PC-3 (cell line): ENCODE measurements at regions of chr2 and their contacts with region 1.

Region 1: DNA sequence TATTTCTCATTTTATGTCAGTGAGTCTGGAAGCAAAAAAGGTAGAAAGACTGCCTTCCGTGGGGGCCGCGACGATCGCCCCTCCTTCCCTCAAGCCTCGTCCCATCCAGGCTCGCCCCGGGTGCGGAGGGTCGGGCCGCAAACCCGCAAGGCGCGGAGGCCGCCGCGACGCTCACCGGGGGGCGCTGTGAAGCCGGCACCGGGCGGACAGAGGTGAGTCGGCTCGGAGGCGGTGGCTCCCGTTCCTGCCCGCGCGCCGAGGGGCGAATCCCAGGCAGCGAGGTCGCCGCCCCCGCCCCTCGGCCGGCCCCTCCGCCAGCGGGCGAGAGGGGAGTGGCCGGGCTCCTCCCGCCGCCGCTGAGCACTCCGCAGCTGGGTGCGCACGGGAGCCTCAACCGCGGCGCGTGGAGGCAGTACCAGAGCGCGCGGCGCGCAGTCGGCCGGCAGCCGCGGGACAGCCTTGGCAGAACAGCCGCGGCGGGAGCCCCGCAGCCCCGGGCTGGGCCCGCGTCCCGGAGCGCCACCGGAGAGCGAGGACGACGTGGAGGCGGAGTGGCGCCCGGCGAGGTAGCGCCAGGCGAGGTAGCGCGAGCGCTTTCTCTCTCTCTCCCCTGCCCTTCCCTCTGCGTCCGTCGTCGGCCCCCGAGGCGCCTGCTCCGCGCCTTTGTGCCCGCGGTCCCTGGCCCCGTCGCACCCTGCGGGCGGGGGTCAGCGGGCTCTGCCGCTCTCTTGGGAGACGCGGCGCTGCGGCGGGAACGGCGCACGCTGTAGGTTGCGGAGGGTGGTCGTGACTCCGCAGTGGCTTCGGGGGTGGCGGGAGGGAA is at the start of gene MYO1B:
- DNase-seq: peak; percentile 88
- ATAC-seq: peak; percentile 75
- H3K4me3 ChIP-seq: peak within 1 kb of the TSS; percentile 90
- H3K27ac ChIP-seq: peak within 1 kb of the TSS; percentile 39
- H3K4me1 ChIP-seq: peaks cover 43% of the 10 kb centered on the region
- H3K27me3 ChIP-seq: no peaks in the 10 kb centered on the region
- CTCF ChIP-seq: peak; percentile 70
- total RNA-seq, gene MYO1B: 88.0 and 93.0 TPM in 2 replicates

Region 2: DNA sequence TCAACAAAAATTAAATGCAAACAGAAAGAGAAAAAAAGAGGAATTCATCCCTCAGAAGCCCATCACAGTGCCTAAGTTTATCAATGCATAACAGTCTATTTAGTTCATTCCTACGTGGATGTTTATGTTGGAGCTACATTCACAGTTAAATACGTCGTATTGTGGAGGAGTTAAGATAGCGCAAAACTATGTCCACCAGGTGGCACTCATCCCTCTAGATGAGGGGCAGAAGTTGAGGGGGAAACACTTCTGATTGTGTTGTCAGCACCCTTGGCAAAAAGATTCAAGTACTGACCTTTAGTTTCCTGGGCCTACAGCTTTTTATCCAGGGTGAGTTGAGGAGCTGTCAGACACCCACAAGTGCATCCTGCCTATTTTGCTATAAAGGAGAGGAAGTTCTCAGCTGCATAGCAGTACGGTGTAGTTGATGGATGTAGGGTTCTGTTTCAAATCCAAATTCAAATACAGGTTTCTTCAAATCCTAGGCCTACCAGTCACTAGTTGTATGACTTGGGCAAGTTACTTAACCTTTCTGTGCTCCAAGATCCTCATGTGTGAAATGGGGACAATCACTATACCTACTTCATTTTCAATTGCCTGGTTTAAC is 26.9 kb before region 1 on chr2:
- CTCF ChIA-PET with region 1: interaction called, 3 read pairs
- POLR2A ChIA-PET with region 1: no interaction called
- intact Hi-C with region 1: loop called (anchors 1 kb)
- DNase-seq: peak; percentile 85
- ATAC-seq: peak; percentile 17; the same call in 1 of the 2 replicates
- H3K4me3 ChIP-seq: peak overlapping the region; percentile 15; the same call in 1 of the 2 replicates
- H3K27ac ChIP-seq: peak overlapping the region; percentile 84
- H3K4me1 ChIP-seq: peaks cover 49% of the 10 kb centered on the region
- H3K27me3 ChIP-seq: no peaks in the 10 kb centered on the region
- CTCF ChIP-seq: peak; percentile 88

Region 3: DNA sequence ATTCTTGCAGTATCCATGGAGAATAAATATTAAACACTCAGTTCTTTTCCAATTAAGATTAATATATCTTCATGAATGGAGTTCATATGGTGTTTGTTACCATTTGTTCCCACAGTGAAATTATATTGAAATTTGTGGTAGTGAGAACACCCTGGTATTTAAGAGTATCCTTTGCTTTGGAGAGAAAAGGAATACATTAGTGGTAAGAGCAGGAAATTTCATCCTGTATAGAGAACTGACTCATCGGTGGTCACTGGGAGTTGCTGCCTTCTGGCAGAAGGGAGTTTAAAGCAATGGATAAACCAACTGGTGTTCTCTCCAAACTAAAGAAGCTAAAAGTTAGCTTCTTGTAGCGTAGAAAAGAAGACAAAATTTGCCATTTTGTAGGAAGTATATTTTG is 107.3 kb after region 1 on chr2:
- CTCF ChIA-PET with region 1: interaction called, 4 read pairs
- POLR2A ChIA-PET with region 1: no interaction called
- intact Hi-C with region 1: loop called (anchors 5 kb)
- DNase-seq: peak; percentile 65
- ATAC-seq: peak; percentile 90
- H3K4me3 ChIP-seq: no peak overlapping the region
- H3K27ac ChIP-seq: no peak overlapping the region
- H3K4me1 ChIP-seq: peaks cover 20% of the 10 kb centered on the region; the same call in 1 of the 2 replicates
- H3K27me3 ChIP-seq: no peaks in the 10 kb centered on the region
- CTCF ChIP-seq: no peak

Region 4: DNA sequence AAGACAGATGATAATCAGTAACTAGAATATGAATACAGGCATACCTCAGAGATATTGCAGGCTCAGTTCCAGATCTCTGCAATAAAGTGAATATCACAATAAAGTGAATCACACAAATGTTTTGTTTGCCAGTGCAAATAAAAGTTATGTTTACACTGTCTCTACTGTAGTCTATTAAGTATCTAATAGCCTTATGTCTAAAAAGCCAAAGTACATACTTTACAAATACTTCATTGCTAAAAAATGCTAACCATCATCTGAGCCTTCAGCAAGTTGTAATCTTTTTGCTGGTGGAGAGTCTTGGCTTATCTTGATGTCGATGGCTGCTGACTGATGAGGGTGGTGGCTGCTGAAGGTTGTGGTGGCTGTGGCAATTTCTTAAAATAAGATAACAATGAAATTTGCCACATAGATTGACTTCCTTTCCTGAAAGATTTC is 159.3 kb after region 1 on chr2:
- CTCF ChIA-PET with region 1: no interaction called
- POLR2A ChIA-PET with region 1: no interaction called
- intact Hi-C with region 1: loop called (anchors 2 kb)
- DNase-seq: peak; percentile 90
- ATAC-seq: peak; percentile 92
- H3K4me3 ChIP-seq: no peak overlapping the region
- H3K27ac ChIP-seq: peak overlapping the region; percentile 39
- H3K4me1 ChIP-seq: peaks cover 28% of the 10 kb centered on the region
- H3K27me3 ChIP-seq: no peaks in the 10 kb centered on the region
- CTCF ChIP-seq: no peak

Region 5: GRCh38 chr2:191465766-191466420 is 220.6 kb after region 1 on chr2:
- CTCF ChIA-PET with region 1: no interaction called
- POLR2A ChIA-PET with region 1: no interaction called
- intact Hi-C with region 1: no loop called
- DNase-seq: peak; percentile 28
- ATAC-seq: peak; percentile 61
- H3K4me3 ChIP-seq: no peak overlapping the region
- H3K27ac ChIP-seq: peak overlapping the region; percentile 32
- H3K4me1 ChIP-seq: peaks cover 8% of the 10 kb centered on the region; the same call in 1 of the 2 replicates
- H3K27me3 ChIP-seq: no peaks in the 10 kb centered on the region
- CTCF ChIP-seq: no peak

Region 6: GRCh38 chr2:191521608-191522208 is 276.5 kb after region 1 on chr2:
- CTCF ChIA-PET with region 1: no interaction called
- POLR2A ChIA-PET with region 1: no interaction called
- intact Hi-C with region 1: loop called (anchors 5 kb)
- DNase-seq: peak; percentile 65
- ATAC-seq: no peak
- H3K4me3 ChIP-seq: no peak overlapping the region
- H3K27ac ChIP-seq: no peak overlapping the region
- H3K4me1 ChIP-seq: no peaks in the 10 kb centered on the region
- H3K27me3 ChIP-seq: no peaks in the 10 kb centered on the region
- CTCF ChIP-seq: peak; percentile 84